HepG2 (cell line): ENCODE measurements at regions of chr4 and their contacts with region 1.

Region 1: DNA sequence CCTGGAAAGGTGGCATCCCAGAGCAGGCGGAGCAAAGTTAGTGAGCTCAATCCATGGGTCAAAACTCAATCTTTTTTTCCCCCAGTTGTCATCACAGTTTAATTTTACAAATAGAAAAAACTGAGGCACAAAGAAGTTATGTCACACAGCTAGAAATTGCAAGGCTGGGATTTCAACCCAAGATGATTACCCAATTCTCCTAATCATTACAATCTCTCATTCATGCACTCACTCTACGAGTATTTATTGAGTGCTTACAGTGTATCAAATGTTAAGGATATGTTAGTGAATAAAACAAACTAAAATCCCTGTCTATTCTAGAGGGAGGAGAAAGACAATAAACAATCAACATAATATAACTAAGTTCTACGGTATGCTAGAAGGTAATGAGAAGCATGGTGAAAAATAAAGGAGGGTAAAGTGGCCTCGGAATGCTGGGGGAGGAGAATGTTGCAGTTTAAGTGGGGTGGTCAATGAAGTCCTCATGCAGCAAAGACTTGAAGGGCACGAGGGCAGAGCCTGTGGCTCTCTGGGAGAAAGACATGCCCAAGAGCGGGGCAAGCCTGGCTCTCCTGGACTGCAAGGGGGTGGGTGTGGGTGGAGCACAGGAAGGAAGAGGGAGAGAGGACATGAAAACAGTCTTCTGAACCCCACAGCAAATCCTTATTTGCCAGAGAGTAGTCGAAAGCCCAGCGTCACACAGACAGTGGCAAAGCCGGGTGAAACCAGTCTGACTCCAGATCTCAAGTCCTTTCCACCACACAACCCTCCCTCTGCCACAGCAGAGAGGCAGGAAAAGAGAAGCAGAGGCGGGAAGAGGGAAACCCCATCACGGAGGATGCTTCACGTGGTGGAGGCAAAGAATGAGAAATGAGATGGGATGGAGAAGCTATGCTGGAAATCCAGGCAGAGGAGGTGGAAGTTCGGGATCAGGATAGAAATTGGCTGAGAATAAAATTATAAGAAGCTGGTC is 48.3 kb downstream of the RAB33B start:
- DNase-seq: no peak
- ATAC-seq: peak; percentile 22; the same call in 1 of the 3 replicates
- H3K4me3 ChIP-seq: no peak overlapping the region
- H3K27ac ChIP-seq: no peak overlapping the region
- H3K4me1 ChIP-seq: peaks cover 15% of the 10 kb centered on the region
- H3K27me3 ChIP-seq: no peaks in the 10 kb centered on the region; a peak in 1 of 5 replicates
- CTCF ChIP-seq: no peak
- EP300 ChIP-seq: no peak
- POLR2A ChIP-seq: no peak
- RAD21 ChIP-seq: no peak

Region 2: DNA sequence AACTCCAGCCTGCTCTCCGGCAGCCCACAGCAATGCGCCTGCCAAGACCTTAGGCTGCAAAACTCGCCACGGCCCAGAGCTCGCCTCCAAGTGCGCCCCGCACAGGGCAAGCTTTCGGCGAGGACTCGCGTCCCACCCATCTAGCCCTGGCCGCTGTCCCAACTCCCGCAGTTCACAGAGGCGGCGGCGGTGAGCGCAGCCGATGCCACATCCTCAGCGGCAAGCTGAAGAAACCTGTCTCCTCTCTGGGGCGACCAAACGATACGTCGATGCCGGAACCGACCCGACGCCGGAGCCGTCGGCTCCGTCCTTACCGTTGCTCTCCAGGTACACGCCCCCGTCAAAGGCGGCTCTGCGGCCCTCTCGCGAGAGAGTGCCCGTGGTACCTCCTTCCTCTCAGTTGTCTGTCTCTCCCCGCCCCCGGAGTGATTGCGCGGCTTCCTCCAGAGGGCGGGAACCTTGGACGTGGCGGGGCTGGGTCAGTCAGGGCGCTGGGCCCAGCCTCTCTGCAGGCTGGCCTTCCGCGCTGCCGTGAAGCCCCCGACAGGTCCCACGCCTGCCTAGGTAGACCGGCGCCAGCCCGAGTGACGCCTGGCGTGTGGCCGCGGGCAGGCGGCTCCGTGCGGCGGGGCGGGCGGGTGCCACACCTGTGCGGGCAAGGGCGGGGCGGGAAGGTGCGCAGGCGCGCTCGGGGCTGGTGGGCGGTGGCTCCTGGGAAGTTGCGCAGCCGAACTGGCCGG is 48.7 kb before region 1 on chr4:
- CTCF ChIA-PET with region 1: interaction called, 3 read pairs
- POLR2A ChIA-PET with region 1: no interaction called
- in situ Hi-C with region 1: no loop called
- intact Hi-C with region 1: loop called (anchors 5 kb)
- DNase-seq: peak; percentile 94
- ATAC-seq: peak; percentile 92
- H3K4me3 ChIP-seq: peak overlapping the region; percentile 68 to 95 (median 93)
- H3K27ac ChIP-seq: peak overlapping the region; percentile 97
- H3K4me1 ChIP-seq: peaks cover 58% of the 10 kb centered on the region
- H3K27me3 ChIP-seq: no peaks in the 10 kb centered on the region; a peak in 1 of 5 replicates
- CTCF ChIP-seq: peak; percentile 58; the same call in 1 of the 2 replicates
- EP300 ChIP-seq: no peak
- POLR2A ChIP-seq: peak; percentile 86 to 92
- RAD21 ChIP-seq: 0 out of 2 replicates have a peak, but pooled peaks have one; percentile 3

Region 3: GRCh38 chr4:139530833-139531427 is 28.7 kb after region 1 on chr4:
- CTCF ChIA-PET with region 1: interaction called, 10 read pairs
- POLR2A ChIA-PET with region 1: no interaction called
- in situ Hi-C with region 1: no loop called
- intact Hi-C with region 1: loop called (anchors 2 kb)
- DNase-seq: peak; percentile 35
- ATAC-seq: peak; percentile 90
- H3K4me3 ChIP-seq: no peak overlapping the region
- H3K27ac ChIP-seq: no peak overlapping the region
- H3K4me1 ChIP-seq: peaks cover 10% of the 10 kb centered on the region
- H3K27me3 ChIP-seq: no peaks in the 10 kb centered on the region
- CTCF ChIP-seq: peak; percentile 80
- EP300 ChIP-seq: no peak
- POLR2A ChIP-seq: no peak
- RAD21 ChIP-seq: no peak